ENCODE measurements at regions of chr10 and their contacts with region 1.

Region 1: DNA sequence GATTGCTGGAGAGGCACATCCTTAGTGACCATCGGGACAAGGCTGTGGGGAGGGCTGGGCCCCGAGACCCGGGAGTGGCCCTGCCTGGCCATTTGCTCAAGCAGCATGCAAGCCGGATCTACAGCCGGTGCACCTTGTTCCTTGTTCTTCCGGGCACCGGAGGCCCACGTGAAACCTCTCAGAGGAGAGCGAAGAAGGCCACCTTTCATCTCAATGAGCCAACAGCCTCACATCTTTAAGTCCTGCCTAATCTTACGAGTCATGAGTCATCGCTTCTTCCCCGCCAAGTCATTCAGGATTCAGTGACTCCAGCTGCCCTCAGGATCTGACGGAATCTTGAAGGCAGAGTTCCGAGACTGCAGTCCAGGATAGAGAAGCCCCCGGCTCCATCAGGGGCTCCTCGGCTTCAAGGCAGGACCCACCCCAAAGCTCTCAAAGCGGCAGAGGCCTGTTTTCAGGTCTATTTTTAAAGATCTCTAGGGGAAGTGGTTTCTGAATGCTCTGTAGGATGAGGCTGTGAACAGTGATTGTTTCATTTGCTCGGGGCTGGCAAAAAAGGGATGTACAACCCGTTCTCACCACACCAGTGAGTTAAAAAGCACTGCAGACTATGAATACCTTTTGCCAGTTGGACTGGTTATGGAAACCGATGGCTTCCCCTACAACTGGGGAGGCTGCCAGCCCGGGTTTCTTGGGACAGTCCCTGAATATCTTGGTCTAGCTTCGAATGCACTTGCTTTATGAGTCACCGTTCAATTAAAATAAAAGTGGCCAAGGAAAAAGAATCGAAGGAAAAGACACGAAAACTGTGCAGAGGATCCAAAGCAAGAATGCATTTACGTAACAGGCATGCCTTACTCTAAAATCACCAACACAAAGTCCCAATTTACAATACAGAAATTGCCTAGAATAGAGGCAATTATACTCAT is 57.2 kb upstream of the ECHDC3 start:
- DNase-seq: peak; percentile 91
- ATAC-seq: peak; percentile 74
- H3K4me3 ChIP-seq: peak overlapping the region; percentile 39 to 63 (median 58)
- H3K4me3 Mint-ChIP-seq: peak overlapping the region; percentile 93
- H3K27ac ChIP-seq: peak overlapping the region; percentile 96 to 98
- H3K27ac Mint-ChIP-seq: peak overlapping the region; percentile 99
- H3K4me1 ChIP-seq: peaks cover 81 to 90% of the 10 kb centered on the region in 2 donors
- H3K4me1 Mint-ChIP-seq: peaks cover 90% of the 10 kb centered on the region
- H3K27me3 ChIP-seq: no peaks in the 10 kb centered on the region
- H3K27me3 Mint-ChIP-seq: no peaks in the 10 kb centered on the region
- CTCF ChIP-seq: no peak

Region 2: DNA sequence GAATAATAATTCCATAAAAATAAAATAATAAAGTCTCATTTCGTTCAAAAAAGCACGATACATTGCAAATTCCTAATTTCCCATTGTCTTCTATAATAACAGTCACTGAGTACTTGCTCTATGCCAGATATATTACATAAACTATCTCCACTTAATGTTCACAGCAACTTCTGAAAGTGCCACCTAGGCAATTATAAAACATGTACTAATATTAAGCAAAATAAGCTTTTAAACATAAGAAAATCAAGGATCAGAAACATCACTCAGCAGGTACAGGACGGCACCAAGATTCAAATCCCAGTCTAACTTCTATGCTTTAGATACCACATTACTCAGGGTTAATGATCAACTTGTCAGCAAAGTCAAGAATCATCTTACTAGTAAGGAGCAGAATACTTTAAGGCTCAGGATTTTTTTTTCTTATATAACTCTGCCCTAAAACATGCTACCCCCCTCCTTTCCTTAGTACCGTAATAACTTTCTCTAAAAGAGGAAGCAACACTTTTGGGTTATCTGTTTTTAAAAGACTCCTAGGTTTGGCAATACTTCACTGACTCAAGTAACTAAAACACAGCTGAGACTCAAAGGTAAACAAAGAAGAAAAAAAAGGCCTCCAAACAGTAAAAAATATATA is 124.8 kb before region 1 on chr10:
- CTCF ChIA-PET with region 1: interaction called, 3 read pairs
- POLR2A ChIA-PET with region 1: interaction called, 3 read pairs
- intact Hi-C with region 1: loop called (anchors 5 kb)
- DNase-seq: peak; percentile 80
- ATAC-seq: peak; percentile 83
- H3K4me3 ChIP-seq: peak overlapping the region in 4 of 5 experiments; percentile 2 to 25 (median 10)
- H3K4me3 Mint-ChIP-seq: peak overlapping the region; percentile 73
- H3K27ac ChIP-seq: peak overlapping the region; percentile 87 to 93
- H3K27ac Mint-ChIP-seq: peak overlapping the region; percentile 95
- H3K4me1 ChIP-seq: peaks cover 53 to 78% of the 10 kb centered on the region in 2 donors
- H3K4me1 Mint-ChIP-seq: peaks cover 81% of the 10 kb centered on the region
- H3K27me3 ChIP-seq: no peaks in the 10 kb centered on the region
- H3K27me3 Mint-ChIP-seq: no peaks in the 10 kb centered on the region
- CTCF ChIP-seq: no peak

Region 3: DNA sequence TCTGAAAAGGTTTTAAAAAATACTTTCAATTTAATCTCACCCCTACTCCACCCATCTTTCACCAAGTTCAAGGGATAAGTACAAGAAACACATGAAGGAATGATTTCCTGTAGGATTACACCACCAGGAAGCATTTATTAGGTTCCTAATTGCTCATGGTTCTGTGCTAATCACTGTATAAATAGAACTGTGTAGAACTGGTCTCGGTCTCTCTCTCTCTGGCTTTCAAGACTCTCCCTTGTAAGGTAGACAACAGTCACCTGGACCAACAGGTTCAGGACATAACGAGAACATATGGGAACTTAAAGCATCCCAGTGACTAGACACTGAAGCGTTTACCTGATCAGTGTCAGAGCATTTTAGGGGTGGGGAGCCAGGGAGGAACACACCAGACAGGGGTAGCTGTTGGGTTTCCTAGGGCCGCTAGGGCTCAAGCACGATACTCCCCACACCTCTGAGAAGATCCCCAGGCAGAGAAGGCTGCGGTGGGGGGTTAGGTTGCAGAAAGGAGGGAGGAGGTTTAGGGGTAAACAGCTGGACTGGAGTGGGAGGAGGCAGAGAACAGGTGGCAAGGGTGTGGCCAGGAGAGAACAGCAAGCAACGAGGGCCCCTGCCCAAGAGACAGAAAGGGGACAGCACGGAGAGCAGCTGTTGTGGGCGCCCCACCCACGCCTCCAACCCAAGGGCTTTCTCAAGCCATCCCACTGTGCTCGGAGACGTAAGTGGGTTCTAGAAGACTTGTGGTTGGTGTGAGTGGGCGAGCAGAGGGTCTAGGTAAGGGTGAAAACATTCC is 21.0 kb before region 1 on chr10:
- CTCF ChIA-PET with region 1: interaction called, 4 read pairs
- POLR2A ChIA-PET with region 1: interaction called, 6 read pairs
- intact Hi-C with region 1: loop called (anchors 1 kb)
- DNase-seq: peak; percentile 70
- ATAC-seq: peak; percentile 70
- H3K4me3 ChIP-seq: peak overlapping the region in 4 of 5 experiments; percentile 10 to 41 (median 25)
- H3K4me3 Mint-ChIP-seq: peak overlapping the region; percentile 87
- H3K27ac ChIP-seq: peak overlapping the region; percentile 63 to 89
- H3K27ac Mint-ChIP-seq: peak overlapping the region; percentile 97
- H3K4me1 ChIP-seq: peaks cover 82 to 87% of the 10 kb centered on the region in 2 donors
- H3K4me1 Mint-ChIP-seq: peaks cover 82% of the 10 kb centered on the region
- H3K27me3 ChIP-seq: no peaks in the 10 kb centered on the region
- H3K27me3 Mint-ChIP-seq: no peaks in the 10 kb centered on the region
- CTCF ChIP-seq: no peak

Region 4: GRCh38 chr10:11713186-11713743 is 28.3 kb after region 1 on chr10:
- CTCF ChIA-PET with region 1: interaction called, 14 read pairs
- POLR2A ChIA-PET with region 1: interaction called, 6 read pairs
- intact Hi-C with region 1: loop called (anchors 2 kb)
- DNase-seq: peak; percentile 34
- ATAC-seq: no peak
- H3K4me3 ChIP-seq: no peak overlapping the region
- H3K4me3 Mint-ChIP-seq: peak overlapping the region; percentile 18
- H3K27ac ChIP-seq: no peak overlapping the region
- H3K27ac Mint-ChIP-seq: peak overlapping the region; percentile 24
- H3K4me1 ChIP-seq: peaks cover 42 to 61% of the 10 kb centered on the region in 2 donors
- H3K4me1 Mint-ChIP-seq: peaks cover 51% of the 10 kb centered on the region
- H3K27me3 ChIP-seq: no peaks in the 10 kb centered on the region
- H3K27me3 Mint-ChIP-seq: no peaks in the 10 kb centered on the region
- CTCF ChIP-seq: no peak

Region 5: DNA sequence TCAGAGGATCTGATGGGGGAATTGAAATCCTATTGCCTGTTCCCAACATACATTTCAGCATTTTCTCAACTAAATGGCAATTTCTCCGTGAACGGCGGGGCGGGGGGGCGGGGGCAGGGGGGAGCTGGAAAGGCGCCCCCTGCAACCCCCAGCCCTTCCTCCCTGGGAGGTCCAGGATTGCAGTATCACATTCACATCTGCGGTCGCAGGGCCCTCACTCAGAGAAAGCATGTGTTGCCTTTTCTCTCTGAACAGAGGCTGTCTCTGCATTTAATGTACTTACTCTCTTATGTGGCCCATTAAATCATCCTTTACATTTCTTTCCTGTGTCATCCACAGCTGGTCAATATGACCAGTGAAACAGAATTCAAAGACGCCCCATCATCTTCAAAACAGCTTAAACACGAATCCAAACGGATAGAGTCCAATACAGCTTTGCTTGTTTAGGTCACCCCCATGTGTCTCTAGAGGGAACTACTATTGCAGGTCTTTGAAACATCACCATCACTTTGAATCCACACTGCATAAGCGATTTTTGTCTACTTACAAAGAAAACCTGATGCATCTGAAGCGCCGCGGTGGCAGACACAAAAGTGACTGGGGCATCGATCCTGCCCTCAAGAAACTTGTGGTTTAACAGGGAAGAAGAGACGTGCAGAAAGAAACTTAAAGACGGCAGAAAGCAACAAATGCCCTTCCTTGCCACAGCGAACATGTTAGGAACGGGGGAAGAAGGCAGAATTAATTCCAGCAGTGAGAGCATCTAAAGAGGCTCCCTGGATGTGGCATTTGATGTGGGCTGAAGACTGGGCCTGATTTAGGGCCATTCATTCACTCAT is 40.2 kb after region 1 on chr10:
- CTCF ChIA-PET with region 1: interaction called, 25 read pairs
- POLR2A ChIA-PET with region 1: interaction called, 6 read pairs
- intact Hi-C with region 1: no loop called
- DNase-seq: peak; percentile 79
- ATAC-seq: peak; percentile 87
- H3K4me3 ChIP-seq: no peak overlapping the region
- H3K4me3 Mint-ChIP-seq: peak overlapping the region; percentile 27
- H3K27ac ChIP-seq: no peak overlapping the region
- H3K27ac Mint-ChIP-seq: peak overlapping the region; percentile 72
- H3K4me1 ChIP-seq: peaks cover 19 to 24% of the 10 kb centered on the region in 2 donors
- H3K4me1 Mint-ChIP-seq: peaks cover 27% of the 10 kb centered on the region
- H3K27me3 ChIP-seq: no peaks in the 10 kb centered on the region
- H3K27me3 Mint-ChIP-seq: no peaks in the 10 kb centered on the region
- CTCF ChIP-seq: peak; percentile 86